ENCODE measurements at regions of chr16 and their contacts with region 1.

Region 1: GRCh38 chr16:4586291-4586690 is 28.4 kb downstream of the UBALD1 start:
- DNase-seq: no peak
- ATAC-seq: no peak
- H3K4me3 ChIP-seq: no peak overlapping the region
- H3K27ac ChIP-seq: no peak overlapping the region
- H3K4me1 ChIP-seq: no peaks in the 10 kb centered on the region
- CTCF ChIP-seq: no peak
- EP300 ChIP-seq: no peak
- POLR2A ChIP-seq: no peak
- RAD21 ChIP-seq: no peak

Region 2: DNA sequence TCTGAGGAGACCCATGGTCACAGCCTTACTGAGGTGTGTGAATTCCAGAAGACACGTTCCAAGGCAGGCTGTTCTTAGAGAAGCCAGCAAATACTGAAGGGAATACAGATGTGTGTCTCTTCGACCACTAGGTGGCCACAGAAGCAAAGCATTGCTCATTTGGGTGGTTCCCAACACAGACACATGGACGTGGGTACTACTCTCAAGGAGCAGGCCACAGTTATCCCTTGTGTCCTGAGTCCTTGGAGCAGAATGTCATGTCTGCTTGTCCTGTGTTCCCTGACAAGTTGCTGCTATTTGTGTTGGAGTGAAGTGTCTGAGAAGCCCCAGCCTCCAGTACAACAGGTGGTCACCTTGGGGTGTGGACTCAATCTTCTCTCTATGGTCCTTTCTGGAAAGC is 79.8 kb before region 1 on chr16:
- CTCF ChIA-PET with region 1: interaction called, 126 read pairs
- POLR2A ChIA-PET with region 1: no interaction called
- DNase-seq: peak; percentile 62 to 77
- ATAC-seq: peak; percentile 89 to 95
- H3K4me3 ChIP-seq: no peak overlapping the region
- H3K27ac ChIP-seq: no peak overlapping the region
- H3K4me1 ChIP-seq: peaks cover 4% of the 10 kb centered on the region
- CTCF ChIP-seq: peak; percentile 88
- EP300 ChIP-seq: no peak
- POLR2A ChIP-seq: no peak
- RAD21 ChIP-seq: peak; percentile 76 to 82

Region 3: GRCh38 chr16:4525067-4525466 is 61.2 kb before region 1 on chr16:
- CTCF ChIA-PET with region 1: interaction called, 22 read pairs
- POLR2A ChIA-PET with region 1: no interaction called
- DNase-seq: no peak
- ATAC-seq: no peak
- H3K4me3 ChIP-seq: no peak overlapping the region
- H3K27ac ChIP-seq: no peak overlapping the region
- H3K4me1 ChIP-seq: no peaks in the 10 kb centered on the region
- CTCF ChIP-seq: no peak
- EP300 ChIP-seq: no peak
- POLR2A ChIP-seq: no peak
- RAD21 ChIP-seq: no peak

Region 4: GRCh38 chr16:4556112-4556511 is 30.2 kb before region 1 on chr16 and contains the start of gene C16orf96:
- CTCF ChIA-PET with region 1: interaction called, 18 read pairs
- POLR2A ChIA-PET with region 1: no interaction called
- DNase-seq: peak in 1 of 2 experiments; percentile 19
- ATAC-seq: peak; percentile 54 to 64; a peak in 4 of 6 replicates
- H3K4me3 ChIP-seq: no peak within 1 kb of the TSS
- H3K27ac ChIP-seq: no peak within 1 kb of the TSS
- H3K4me1 ChIP-seq: no peaks in the 10 kb centered on the region
- CTCF ChIP-seq: no peak
- EP300 ChIP-seq: no peak
- POLR2A ChIP-seq: no peak
- RAD21 ChIP-seq: no peak
- polyA plus RNA-seq, gene C16orf96: 0.03 TPM in 1 of 2 replicates, not detected in the other

Region 5: DNA sequence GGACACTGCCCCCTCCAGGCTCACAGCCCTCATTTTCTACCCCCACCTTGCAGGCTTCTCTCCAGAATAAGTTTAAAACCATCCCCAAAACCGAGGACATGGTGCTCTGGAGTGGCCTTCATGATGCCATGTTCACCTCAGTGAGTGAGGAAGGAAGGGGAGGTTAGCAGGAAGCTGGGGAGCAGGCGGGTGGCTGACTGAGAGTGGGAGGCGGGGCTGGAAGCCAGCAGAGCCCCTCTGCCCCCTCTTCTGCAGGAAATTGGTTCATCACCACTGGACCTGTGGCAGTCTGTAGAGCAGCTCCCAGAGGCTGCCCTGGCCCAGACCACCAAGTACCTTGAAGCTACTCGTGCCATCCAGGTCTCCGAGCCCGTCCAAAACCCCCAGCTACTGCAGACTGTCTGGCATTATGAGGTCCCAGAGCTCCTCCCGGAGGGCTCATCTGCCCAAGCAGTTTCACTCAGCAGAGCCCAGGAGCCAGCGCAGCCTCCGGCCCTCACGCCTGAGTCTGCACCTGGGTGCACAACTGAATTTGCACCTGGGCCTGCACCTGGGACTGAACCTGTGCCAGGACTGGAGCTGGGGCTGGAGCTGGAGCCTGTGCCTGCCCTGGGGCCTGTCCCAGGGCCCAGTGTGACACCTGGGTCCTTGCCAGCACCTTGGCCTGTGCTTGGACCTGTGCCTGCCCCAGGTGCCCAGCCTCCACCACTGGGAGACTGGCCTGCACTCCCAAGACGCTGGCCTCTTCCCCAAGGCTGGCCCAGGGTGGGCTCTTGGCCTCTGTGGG is 11.2 kb before region 1 on chr16:
- CTCF ChIA-PET with region 1: interaction called, 35 read pairs
- POLR2A ChIA-PET with region 1: no interaction called
- DNase-seq: no peak
- ATAC-seq: peak; percentile 33 to 63; a peak in 3 of 6 replicates
- H3K4me3 ChIP-seq: no peak overlapping the region
- H3K27ac ChIP-seq: no peak overlapping the region
- H3K4me1 ChIP-seq: peaks cover 6% of the 10 kb centered on the region
- CTCF ChIP-seq: no peak
- EP300 ChIP-seq: no peak
- POLR2A ChIP-seq: no peak
- RAD21 ChIP-seq: 0 out of 5 replicates have a peak, but pooled peaks of 1 of the 2 experiments have one; percentile 12

Region 6: DNA sequence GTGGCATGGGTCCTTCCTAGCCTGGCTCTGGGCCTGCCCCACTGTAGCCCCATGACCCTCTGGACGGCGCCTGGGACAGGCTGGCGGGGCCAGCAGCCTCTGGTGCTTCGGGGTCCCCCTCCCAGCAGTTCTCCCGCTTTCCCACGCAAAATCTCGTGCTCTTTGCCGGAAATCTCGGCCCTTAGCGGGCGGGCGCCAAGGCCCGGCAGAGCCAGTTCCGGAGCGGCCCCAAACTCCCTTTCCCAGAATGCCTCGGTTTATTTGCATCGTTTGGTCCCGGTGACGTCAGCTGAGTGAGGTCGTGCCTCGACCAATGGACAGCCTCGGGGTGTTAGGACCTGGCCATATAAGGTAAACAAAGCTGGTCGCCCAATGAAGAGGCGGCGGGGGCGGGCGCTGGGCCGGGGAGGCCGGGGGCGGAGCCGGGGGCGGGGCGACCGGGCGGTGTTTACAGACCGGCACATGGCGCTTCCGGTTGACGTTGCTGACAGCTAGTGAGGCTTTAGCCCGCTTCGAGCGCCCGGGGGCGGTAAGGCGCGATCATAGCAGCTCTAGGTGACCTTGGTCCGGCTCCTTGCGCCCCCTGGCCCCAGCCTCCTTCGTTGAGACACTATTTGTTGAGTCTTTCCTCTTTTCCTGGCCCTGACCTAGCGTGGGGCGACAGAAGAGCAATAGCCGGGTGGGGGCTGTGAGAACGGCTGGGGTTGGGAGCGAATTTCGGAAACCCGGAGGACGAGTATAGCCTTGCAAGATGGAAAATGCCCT is 29.9 kb after region 1 on chr16:
- CTCF ChIA-PET with region 1: interaction called, 13 read pairs
- POLR2A ChIA-PET with region 1: interaction called, 6 read pairs
- DNase-seq: peak; percentile 98 to 100
- ATAC-seq: peak; percentile 74 to 83
- H3K4me3 ChIP-seq: peak overlapping the region; percentile 56
- H3K27ac ChIP-seq: peak overlapping the region; percentile 93 to 98
- H3K4me1 ChIP-seq: peaks cover 42% of the 10 kb centered on the region
- CTCF ChIP-seq: peak; percentile 41
- EP300 ChIP-seq: no peak
- POLR2A ChIP-seq: peak; percentile 72
- RAD21 ChIP-seq: peak in 1 of 2 experiments; percentile 21; a peak in 2 of 5 replicates